GM10248 (cell line): ENCODE measurements at regions of chr14 and their contacts with region 1.

Region 1: DNA sequence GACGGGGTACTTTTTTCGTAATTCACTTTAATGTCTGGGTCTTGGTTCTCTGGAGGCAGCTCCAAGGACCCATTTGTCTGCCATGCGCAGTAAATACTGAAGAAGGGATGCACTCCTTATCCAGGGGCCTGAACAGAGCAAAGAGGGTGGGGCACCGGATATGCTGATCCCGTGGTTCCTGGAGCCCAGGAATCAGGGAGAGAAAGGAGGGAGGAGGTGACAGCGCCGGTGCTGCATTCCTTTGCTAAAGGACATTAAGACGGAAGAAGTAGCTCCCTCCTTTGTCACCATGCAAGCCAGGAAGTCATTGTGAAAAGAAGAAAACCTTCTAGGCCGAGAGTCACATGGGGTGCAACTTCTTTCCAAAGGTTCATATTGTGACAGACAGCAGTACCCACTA is 1057.7 kb downstream of the VRK1 start:
- DNase-seq: no peak
- CTCF ChIP-seq: no peak

Region 2: GRCh38 chr14:96710060-96710666 is 1144.8 kb before region 1 on chr14:
- CTCF ChIA-PET with region 1: no interaction called
- POLR2A ChIA-PET with region 1: interaction called, 11 read pairs
- DNase-seq: peak; percentile 44
- CTCF ChIP-seq: no peak